Right ventricle myocardium inferior (tissue), 1 donor: ENCODE measurements at regions of chr10 and their contacts with region 1.

Region 1: DNA sequence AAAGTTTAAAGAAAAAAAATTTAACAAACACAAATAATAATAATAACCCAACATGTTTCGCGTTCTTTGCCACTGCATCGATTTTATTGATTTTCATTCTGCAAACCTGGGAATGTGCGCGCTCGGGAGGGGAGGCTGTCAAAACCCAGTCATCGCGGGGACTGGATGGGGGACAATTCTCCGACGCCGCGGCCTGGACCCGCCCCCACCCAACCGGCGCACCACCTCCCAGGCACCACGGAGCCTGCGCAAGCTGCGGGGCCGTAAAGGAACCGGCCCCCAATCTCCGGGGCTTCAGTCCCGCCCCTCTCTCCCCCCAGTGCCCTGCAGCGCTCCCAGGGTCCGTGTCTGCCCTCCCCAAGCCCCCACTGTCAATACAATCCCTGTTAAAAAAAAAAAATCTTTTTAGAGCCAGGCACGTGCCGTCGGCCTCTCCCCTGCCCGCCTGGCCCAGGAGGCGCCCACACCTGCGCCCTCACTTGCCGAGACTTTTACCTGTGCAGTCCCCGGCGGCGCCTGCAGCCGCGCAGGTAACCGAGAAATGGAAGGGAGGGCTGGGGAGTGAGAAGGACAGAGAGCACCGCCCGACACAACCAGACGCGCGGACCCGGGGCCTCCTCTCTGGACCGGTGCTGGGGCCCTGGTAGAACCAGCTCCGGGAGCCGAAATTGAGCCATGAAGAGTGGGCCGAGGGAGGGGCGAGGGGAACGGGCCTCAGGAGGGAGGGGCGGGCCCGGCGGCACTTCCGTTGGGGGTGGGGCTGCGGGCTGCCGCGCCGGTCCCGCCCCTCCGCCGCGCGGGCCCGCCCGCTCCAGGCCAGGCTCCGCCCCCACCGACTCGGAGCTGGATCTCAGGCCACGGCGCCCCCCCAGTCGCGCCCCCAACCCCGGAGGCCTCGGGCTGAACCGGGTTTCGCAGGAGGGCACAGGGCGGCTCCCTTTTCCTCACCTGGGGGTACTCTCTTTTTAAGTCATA is 7.6 kb upstream of the ZNF503 start:
- DNase-seq: peak; percentile 89
- ATAC-seq: peak; percentile 93

Region 2: DNA sequence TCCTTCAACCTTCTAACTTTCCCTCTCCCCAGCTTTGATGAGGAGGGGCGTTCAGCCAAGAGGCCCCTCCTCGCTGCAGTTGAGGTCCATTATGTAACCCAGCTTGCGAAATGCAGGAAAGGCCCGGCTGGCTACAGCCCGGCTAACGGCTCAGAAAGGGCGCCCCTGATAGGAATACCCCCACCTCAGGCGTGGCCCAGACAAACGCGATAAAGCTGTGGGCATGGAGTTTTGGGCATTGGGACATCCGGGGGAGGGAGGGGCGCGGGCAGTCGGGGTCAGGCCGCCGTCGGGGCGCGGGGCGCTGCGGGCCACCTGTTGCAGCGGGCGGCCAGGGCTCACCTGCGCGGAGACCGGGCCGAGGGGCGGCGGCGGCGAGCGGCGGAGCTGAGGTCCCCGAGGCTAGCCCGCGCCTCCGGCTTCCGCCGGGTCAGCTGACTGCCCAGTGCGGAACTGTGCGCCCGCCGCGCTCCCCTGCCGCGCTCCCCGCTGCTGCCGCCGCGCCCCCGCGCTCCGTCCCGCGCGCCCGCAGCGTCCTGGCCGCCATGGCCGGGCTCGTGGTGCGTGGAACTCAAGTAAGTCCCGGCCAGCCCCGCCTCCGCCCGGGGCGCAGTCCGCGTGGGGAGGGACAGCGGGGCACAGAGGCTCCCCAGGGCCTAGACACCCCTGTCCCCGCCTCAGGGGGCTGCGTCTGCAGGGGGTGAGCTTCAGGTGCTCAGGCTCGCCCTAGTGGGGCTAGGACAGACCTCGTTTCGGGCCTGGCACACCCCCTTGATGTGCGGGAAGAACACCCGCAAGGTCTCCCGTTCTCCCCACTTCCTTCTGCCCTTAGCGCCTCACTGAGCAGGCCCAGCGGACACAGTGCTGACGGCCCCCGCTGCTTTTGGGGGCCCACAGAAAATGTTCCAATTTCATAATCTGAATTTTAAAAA is 22.2 kb after region 1 on chr10 and contains the start of gene LRMDA:
- intact Hi-C with region 1: loop called (anchors 1 kb)
- DNase-seq: peak; percentile 85
- ATAC-seq: peak; percentile 75
- total RNA-seq, gene LRMDA: 22.3 TPM

Region 3: DNA sequence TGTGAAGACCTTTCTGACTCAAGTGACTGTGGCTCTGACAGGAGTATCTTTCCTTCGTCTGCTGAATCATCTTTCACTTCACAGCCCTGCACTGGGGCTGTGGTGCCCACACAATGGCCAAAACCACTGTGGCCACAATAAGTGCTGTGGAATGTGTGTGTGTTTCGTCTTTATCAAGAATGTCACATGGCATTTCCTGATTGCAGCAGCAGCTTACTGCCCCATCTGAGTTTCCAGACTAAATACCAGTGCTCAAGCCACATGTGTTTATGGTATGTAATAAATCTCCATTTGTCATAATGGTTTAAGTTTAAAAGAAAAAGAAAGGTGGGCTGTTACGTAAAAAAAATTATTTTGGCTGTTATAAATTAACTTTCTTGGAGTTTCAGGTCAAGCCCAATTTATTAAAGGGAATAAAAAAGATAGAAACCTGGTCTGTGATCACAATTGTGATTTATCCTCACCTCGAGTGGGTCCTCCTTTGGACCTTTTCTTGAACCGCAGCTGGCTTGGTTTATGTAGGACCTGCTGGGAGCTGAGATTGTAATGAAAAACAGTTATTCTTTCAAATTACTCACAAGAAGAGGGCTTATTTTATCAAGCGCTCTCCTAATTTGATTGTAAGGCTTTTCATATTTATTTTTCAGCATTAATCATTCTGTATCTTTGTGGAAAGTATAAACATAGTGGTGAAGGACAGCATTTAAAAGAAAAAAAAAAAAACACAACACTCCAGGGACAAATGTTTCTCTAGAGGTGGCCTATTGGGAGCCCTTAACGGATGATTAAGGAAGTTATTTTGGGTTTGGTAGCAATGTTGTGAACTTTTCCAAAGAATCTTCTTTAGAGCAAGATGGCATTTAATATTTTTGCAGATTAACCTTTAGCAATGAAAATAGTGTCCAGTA is 138.4 kb after region 1 on chr10:
- intact Hi-C with region 1: loop called (anchors 5 kb)
- DNase-seq: no peak
- ATAC-seq: no peak

Region 4: GRCh38 chr10:75593692-75594556 is 184.7 kb after region 1 on chr10:
- intact Hi-C with region 1: loop called (anchors 1 kb)
- DNase-seq: no peak
- ATAC-seq: no peak